ENCODE measurements at regions of chr1 and their contacts with region 1.

Region 1: GRCh38 chr1:42173155-42173933 is 8.8 kb upstream of the GUCA2A start:
- DNase-seq: peak in 1 of 2 experiments; percentile 91
- H3K4me3 ChIP-seq: no peak overlapping the region
- H3K27ac ChIP-seq: no peak overlapping the region
- H3K4me1 ChIP-seq: peaks cover 0 to 7% (median 3%) of the 10 kb centered on the region in 4 experiments; a peak in 2 of 7 replicates
- H3K27me3 ChIP-seq: no peaks in the 10 kb centered on the region
- CTCF ChIP-seq: peak; percentile 82 to 97 (median 97)
- EP300 ChIP-seq: no peak
- POLR2A ChIP-seq: peak in 1 of 2 experiments; percentile 29; a peak in 1 of 3 replicates
- RAD21 ChIP-seq: peak; percentile 63 to 70

Region 2: DNA sequence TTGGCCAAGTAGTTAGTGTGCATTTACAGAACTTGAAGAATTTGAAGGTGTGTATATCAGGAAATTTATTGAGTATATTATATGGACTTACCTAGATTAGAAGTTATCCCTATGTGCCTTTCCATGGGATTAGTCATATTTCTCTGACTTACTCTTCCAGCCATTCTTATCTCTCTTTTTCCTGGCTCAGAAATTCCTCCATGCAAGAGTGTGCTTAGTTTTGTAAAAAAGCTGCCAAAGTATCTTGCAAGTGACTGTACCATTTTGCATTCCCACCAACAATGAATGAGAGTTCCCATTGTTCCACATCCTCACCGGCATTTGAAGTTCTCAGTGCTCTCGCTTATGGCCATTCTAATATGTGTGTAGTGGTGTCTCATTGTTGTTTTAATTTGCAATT is 102.3 kb before region 1 on chr1:
- CTCF ChIA-PET with region 1: no interaction called
- POLR2A ChIA-PET with region 1: no interaction called
- DNase-seq: no peak
- H3K4me3 ChIP-seq: no peak overlapping the region
- H3K27ac ChIP-seq: no peak overlapping the region
- H3K4me1 ChIP-seq: no peaks in the 10 kb centered on the region
- H3K27me3 ChIP-seq: no peaks in the 10 kb centered on the region
- CTCF ChIP-seq: no peak
- EP300 ChIP-seq: no peak
- POLR2A ChIP-seq: no peak
- RAD21 ChIP-seq: no peak

Region 3: DNA sequence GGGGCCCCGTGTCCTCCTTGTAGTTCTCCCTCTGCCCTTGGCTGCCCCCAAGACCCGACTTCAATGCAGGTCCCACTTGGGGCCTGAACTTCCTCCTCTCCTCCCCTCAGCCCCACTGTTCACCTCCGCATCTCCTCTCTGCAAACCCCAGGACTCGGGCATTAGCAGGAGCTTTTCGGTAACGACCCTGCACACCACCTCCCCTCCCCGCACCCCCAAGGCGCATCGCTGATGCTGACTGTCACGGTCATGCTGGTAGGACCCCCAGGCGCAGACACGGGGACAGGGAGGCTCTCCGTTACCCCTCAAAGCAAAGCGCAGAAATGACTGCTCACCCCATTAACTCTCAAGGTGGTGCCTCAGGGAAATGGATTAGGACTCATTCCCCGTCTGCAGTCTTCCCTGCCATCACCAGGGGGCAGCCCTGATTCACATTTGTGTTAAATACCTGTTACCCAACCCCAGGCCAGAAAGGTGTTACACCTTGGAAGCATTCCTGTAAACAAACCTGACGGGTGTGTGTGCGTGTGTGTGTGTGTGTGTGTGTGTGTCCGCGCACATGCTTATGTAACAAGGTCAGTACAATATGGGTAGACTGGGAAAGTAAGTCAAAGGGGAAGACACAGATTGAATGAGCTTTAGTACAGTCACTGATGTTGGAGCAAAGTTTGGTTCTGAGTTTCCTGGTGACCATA is 26.6 kb before region 1 on chr1:
- CTCF ChIA-PET with region 1: interaction called, 77 read pairs
- POLR2A ChIA-PET with region 1: interaction called, 3 read pairs
- DNase-seq: peak; percentile 62 to 93
- H3K4me3 ChIP-seq: no peak overlapping the region
- H3K27ac ChIP-seq: no peak overlapping the region
- H3K4me1 ChIP-seq: no peaks in the 10 kb centered on the region
- H3K27me3 ChIP-seq: no peaks in the 10 kb centered on the region; a peak in 2 of 7 replicates
- CTCF ChIP-seq: peak; percentile 83 to 92 (median 88)
- EP300 ChIP-seq: 0 out of 3 replicates have a peak, but pooled peaks of 1 of the 2 experiments have one; percentile 33
- POLR2A ChIP-seq: no peak
- RAD21 ChIP-seq: peak; percentile 95

Region 4: DNA sequence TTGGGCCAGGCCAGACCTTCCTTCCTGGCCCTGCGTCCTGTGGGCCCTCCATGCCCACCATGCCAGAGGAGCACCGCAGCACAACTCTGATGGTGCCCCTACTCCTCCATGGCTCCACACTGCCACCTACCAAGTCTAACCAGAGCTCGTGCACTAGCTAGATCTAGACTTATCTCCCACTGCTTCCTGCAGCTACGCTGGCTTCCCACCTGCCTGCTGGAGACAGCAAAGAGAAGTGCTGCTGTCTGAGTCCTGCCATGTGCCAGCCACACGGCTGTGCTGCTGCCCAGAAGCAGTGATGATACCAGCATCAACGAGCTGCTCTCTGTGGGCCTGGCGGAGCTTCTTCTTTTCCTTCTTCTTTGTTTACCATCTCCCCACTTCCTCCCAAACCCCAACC is 15.7 kb before region 1 on chr1:
- CTCF ChIA-PET with region 1: interaction called, 77 read pairs
- POLR2A ChIA-PET with region 1: no interaction called
- DNase-seq: no peak
- H3K4me3 ChIP-seq: no peak overlapping the region
- H3K27ac ChIP-seq: no peak overlapping the region
- H3K4me1 ChIP-seq: no peaks in the 10 kb centered on the region
- H3K27me3 ChIP-seq: no peaks in the 10 kb centered on the region
- CTCF ChIP-seq: peak in 2 of 3 experiments; percentile 19 to 43; a peak in 2 of 4 replicates
- EP300 ChIP-seq: no peak
- POLR2A ChIP-seq: no peak
- RAD21 ChIP-seq: peak; percentile 39 to 57; a peak in 3 of 4 replicates

Region 5: GRCh38 chr1:42189931-42190853 is 16.8 kb after region 1 on chr1:
- CTCF ChIA-PET with region 1: interaction called, 14 read pairs
- POLR2A ChIA-PET with region 1: no interaction called
- DNase-seq: no peak
- H3K4me3 ChIP-seq: no peak overlapping the region
- H3K27ac ChIP-seq: no peak overlapping the region
- H3K4me1 ChIP-seq: no peaks in the 10 kb centered on the region
- H3K27me3 ChIP-seq: no peaks in the 10 kb centered on the region
- CTCF ChIP-seq: no peak
- EP300 ChIP-seq: no peak
- POLR2A ChIP-seq: no peak
- RAD21 ChIP-seq: no peak

Region 6: GRCh38 chr1:42316292-42316691 is 142.9 kb after region 1 on chr1:
- CTCF ChIA-PET with region 1: interaction called, 10 read pairs
- POLR2A ChIA-PET with region 1: no interaction called
- DNase-seq: no peak
- H3K4me3 ChIP-seq: no peak overlapping the region
- H3K27ac ChIP-seq: no peak overlapping the region
- H3K4me1 ChIP-seq: no peaks in the 10 kb centered on the region; a peak in 2 of 7 replicates
- H3K27me3 ChIP-seq: no peaks in the 10 kb centered on the region
- CTCF ChIP-seq: no peak
- EP300 ChIP-seq: no peak
- POLR2A ChIP-seq: no peak
- RAD21 ChIP-seq: no peak